ENCODE measurements at regions of chr1 and their contacts with region 1.

Region 1: GRCh38 chr1:210301615-210302000 is 27.1 kb upstream of the HHAT start:
- DNase-seq: no peak

Region 2: DNA sequence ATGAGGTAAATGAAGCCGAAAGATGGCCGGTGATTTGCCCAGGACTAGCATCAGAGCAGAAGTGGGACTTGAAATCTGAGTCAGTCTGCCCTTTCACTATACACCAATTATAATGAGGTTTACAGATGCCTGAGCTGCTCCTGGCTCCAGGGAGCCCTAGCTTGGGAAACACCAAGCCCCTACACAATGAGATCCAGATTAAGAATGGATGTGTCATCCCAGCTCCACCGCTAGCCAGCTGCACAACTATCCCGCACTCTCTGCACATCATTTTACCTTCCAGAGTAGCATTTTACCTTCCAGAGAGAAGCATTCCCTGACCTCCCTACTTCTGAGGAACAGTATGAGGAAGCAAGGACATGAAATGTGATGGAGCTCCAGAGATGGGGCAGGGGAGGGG is 42.0 kb before region 1 on chr1:
- intact Hi-C with region 1: loop called (anchors 5 kb)
- DNase-seq: no peak